ENCODE measurements at regions of chr6 and their contacts with region 1.

Region 1: DNA sequence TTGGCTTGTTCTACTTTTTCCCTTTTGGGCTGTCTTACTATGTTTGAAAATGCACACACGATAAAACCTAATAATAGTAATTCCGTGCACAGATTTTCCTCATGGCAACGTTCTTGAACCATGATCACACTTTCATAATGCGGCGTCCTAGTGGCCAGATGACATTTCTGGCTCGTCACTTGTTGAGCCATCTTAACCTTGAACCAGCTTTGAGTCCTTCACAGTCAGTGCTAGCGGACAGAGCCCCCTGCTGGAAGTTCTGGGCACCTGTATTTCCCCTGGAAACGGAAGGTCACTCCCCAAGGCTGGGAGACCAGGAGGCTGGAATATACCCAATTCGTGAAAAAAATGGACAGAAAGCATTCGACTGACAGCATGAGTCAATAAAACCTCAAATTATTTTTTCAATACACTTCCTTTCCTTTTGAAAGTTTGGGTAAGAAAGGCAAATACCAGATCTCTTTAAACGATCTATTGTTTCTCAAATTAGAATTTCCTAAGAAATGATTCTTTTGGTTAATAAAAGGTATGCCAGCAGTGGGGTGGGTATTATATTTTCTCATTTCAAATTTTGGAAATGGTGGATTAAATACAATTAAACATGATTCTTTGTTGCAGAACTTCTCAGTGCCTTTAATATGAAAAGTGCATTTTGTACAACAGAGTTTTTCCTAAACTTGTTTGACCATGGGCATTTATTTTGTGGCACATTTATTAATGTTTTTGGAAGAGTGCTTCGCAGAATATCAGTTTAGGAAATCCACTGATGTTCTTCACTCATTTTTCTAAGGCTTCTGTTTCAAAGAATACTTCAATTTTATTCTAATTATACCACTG is 542.3 kb downstream of the QKI start:
- DNase-seq: peak; percentile 67
- ATAC-seq: peak; percentile 99
- H3K4me3 ChIP-seq: no peak overlapping the region
- H3K27ac ChIP-seq: no peak overlapping the region
- H3K4me1 ChIP-seq: no peaks in the 10 kb centered on the region
- H3K27me3 ChIP-seq: no peaks in the 10 kb centered on the region
- CTCF ChIP-seq: peak; percentile 61 to 83 (median 77); a peak in 5 of 6 replicates
- POLR2A ChIP-seq: no peak
- RAD21 ChIP-seq: peak; percentile 83

Region 2: DNA sequence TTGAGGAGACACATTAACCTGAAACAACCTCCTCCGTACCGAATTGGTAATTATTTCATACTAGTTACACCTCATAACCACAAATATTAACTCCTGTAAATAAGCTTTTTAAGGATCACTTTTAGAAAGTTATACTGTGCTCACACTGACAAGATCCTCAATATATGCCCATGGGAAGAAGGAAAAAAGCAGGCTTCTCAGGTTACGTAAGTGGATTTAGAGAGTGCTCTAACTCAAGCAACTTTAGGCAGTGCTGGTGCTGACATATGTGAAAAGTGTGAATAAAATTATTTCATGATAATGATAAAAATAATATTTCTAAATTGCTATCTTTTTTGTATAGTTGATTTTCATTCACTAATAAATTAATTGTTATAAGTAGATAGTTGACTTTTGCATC is 1305.3 kb before region 1 on chr6:
- CTCF ChIA-PET with region 1: no interaction called
- POLR2A ChIA-PET with region 1: no interaction called
- RAD21 ChIA-PET with region 1: no interaction called
- intact Hi-C with region 1: no loop called
- DNase-seq: no peak
- ATAC-seq: no peak
- H3K4me3 ChIP-seq: no peak overlapping the region
- H3K27ac ChIP-seq: no peak overlapping the region
- H3K4me1 ChIP-seq: no peaks in the 10 kb centered on the region
- H3K27me3 ChIP-seq: no peaks in the 10 kb centered on the region
- CTCF ChIP-seq: no peak
- POLR2A ChIP-seq: no peak
- RAD21 ChIP-seq: no peak

Region 3: DNA sequence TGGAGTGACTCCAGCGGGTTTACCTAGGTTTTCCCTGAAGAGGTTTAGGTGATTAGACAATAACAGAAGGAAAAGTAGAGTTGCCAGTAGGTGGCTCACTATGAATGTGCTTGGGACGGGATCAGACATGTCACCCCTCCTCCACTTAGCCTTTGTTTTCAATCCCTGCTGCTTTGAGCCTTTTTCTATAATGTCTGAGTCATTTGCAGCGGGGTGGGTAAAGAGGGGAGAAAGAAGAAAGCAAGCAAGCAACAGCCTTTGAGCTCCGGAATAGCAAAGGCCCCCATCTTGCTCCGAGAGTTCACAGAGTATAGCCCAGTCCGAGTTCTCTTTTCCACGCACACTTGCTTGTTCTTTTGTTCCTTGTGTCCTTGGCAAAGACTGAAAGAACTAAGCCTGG is 1099.9 kb before region 1 on chr6:
- CTCF ChIA-PET with region 1: no interaction called
- POLR2A ChIA-PET with region 1: no interaction called
- RAD21 ChIA-PET with region 1: no interaction called
- intact Hi-C with region 1: loop called (anchors 5 kb)
- DNase-seq: peak; percentile 29
- ATAC-seq: peak; percentile 93
- H3K4me3 ChIP-seq: no peak overlapping the region
- H3K27ac ChIP-seq: no peak overlapping the region
- H3K4me1 ChIP-seq: peaks cover 0 to 8% of the 10 kb centered on the region in 2 experiments; a peak in 1 of 4 replicates
- H3K27me3 ChIP-seq: no peaks in the 10 kb centered on the region
- CTCF ChIP-seq: peak; percentile 23 to 51 (median 43); a peak in 5 of 6 replicates
- POLR2A ChIP-seq: no peak
- RAD21 ChIP-seq: peak; percentile 73

Region 4: DNA sequence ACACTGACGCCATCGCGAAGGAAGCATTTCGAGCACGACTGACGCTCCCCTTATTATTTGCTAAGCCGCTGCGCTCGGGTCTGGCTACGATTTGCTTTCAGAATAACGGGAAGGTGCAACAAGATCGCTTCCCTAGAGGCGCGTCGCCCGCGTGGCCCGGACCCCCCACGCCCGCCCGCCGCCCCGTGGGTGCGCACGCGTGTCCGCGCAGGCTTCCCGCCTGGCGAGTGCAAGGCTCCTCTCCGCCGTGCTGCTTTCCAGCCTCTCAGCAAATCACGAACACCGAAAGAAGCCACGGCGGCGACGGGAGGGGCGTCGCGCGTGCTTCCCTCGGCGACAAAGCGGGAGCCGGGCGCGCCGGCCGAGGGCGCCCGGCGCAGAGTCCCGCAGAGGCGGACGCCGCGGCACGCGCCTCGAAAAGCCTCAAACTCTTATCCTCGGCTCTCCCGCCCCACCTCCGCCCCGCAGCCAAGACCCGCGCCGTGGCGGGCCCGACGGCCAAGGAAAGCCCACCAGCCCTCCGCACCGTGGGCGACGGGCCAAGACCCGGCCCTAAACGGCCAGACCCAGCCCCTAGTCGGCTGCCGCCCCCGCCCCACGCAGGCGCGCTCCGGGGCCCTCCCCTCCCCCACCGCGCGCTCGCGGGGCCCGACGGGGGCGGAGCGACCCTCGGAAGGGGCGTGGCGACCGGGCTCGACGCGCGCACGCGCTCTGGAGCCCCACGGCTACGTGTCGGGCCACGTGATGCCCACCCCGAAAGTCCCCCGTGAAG is 543.3 kb before region 1 on chr6:
- CTCF ChIA-PET with region 1: interaction called, 5 read pairs
- POLR2A ChIA-PET with region 1: no interaction called
- RAD21 ChIA-PET with region 1: no interaction called
- intact Hi-C with region 1: loop called (anchors 2 kb)
- DNase-seq: peak; percentile 29
- ATAC-seq: peak; percentile 64
- H3K4me3 ChIP-seq: no peak overlapping the region; a peak in 1 of 4 replicates
- H3K27ac ChIP-seq: peak overlapping the region; percentile 24; the same call in 1 of the 2 replicates
- H3K4me1 ChIP-seq: peaks cover 3 to 4% of the 10 kb centered on the region in 2 experiments
- H3K27me3 ChIP-seq: no peaks in the 10 kb centered on the region
- CTCF ChIP-seq: no peak
- POLR2A ChIP-seq: no peak
- RAD21 ChIP-seq: no peak

Region 5: DNA sequence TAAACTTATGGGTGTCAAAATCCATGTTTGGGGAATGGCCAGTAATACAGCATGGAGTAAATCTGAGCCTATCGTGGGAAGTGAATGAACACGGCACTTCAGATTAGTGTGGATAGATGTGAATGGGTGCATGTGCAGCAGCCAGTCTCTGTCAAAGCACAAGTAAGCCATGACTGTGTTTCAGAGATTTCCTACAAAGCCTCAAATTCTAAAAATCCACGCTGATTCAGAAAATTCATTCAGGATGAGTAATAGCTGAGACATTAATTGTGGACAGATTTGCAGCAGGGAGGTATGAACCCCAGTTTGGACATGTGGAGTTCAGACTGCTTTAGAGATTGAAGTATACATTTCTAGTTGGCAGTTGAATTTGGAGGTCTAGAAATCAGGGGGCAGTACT is 427.2 kb before region 1 on chr6:
- CTCF ChIA-PET with region 1: no interaction called
- POLR2A ChIA-PET with region 1: no interaction called
- RAD21 ChIA-PET with region 1: no interaction called
- intact Hi-C with region 1: no loop called
- DNase-seq: no peak
- ATAC-seq: peak; percentile 53
- H3K4me3 ChIP-seq: no peak overlapping the region
- H3K27ac ChIP-seq: no peak overlapping the region
- H3K4me1 ChIP-seq: peaks cover 4 to 33% of the 10 kb centered on the region in 2 experiments; a peak in 3 of 4 replicates
- H3K27me3 ChIP-seq: no peaks in the 10 kb centered on the region
- CTCF ChIP-seq: no peak
- POLR2A ChIP-seq: no peak
- RAD21 ChIP-seq: no peak

Region 6: GRCh38 chr6:163554663-163555062 is 402.1 kb before region 1 on chr6:
- CTCF ChIA-PET with region 1: no interaction called
- POLR2A ChIA-PET with region 1: no interaction called
- RAD21 ChIA-PET with region 1: no interaction called
- intact Hi-C with region 1: loop called (anchors 10 kb)
- DNase-seq: no peak
- ATAC-seq: peak; percentile 60; the same call in 1 of the 2 replicates
- H3K4me3 ChIP-seq: no peak overlapping the region
- H3K27ac ChIP-seq: no peak overlapping the region
- H3K4me1 ChIP-seq: no peaks in the 10 kb centered on the region
- H3K27me3 ChIP-seq: no peaks in the 10 kb centered on the region
- CTCF ChIP-seq: peak; percentile 27 to 61 (median 52); a peak in 4 of 6 replicates
- POLR2A ChIP-seq: no peak
- RAD21 ChIP-seq: peak; percentile 58

Region 7: DNA sequence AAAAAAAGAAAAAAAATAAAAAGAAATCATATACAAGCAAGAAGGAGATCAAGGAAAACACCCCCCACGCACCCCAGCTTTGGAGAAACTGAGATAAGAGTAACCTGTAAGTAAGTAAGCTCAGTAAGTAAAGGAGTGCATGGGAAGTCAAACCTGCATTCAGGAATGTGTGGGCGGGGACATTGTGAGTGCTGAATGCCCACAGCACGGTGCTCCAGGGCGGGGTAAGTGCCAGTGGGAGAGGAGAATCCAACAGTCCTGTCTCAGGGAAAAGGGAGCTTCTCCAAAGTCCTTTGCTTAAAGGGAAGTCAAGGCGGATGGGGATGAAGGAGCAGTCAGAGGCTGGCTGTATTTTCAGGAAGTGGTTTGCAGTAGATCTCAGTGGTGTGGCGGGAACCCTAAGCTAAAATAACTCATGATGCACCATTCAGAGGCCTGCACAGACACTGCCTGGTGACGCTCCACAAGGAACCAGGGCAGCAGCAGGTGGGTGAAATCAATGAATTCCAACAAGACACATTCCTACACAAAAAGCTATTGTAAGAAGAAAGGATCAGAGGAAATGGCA is 174.3 kb before region 1 on chr6:
- CTCF ChIA-PET with region 1: no interaction called
- POLR2A ChIA-PET with region 1: no interaction called
- RAD21 ChIA-PET with region 1: no interaction called
- intact Hi-C with region 1: no loop called
- DNase-seq: no peak
- ATAC-seq: no peak
- H3K4me3 ChIP-seq: no peak overlapping the region
- H3K27ac ChIP-seq: no peak overlapping the region
- H3K4me1 ChIP-seq: no peaks in the 10 kb centered on the region
- H3K27me3 ChIP-seq: no peaks in the 10 kb centered on the region
- CTCF ChIP-seq: no peak
- POLR2A ChIP-seq: no peak
- RAD21 ChIP-seq: no peak

Region 8: GRCh38 chr6:164122109-164122508 is 165.3 kb after region 1 on chr6:
- CTCF ChIA-PET with region 1: no interaction called
- POLR2A ChIA-PET with region 1: no interaction called
- RAD21 ChIA-PET with region 1: no interaction called
- intact Hi-C with region 1: no loop called
- DNase-seq: no peak
- ATAC-seq: no peak
- H3K4me3 ChIP-seq: no peak overlapping the region
- H3K27ac ChIP-seq: no peak overlapping the region
- H3K4me1 ChIP-seq: no peaks in the 10 kb centered on the region
- H3K27me3 ChIP-seq: no peaks in the 10 kb centered on the region
- CTCF ChIP-seq: no peak
- POLR2A ChIP-seq: no peak
- RAD21 ChIP-seq: no peak

Measured in HCT116 (cell line).